Endothelial cell of umbilical vein (primary cell): ENCODE measurements at regions of chr19 and their contacts with region 1.

Region 1: DNA sequence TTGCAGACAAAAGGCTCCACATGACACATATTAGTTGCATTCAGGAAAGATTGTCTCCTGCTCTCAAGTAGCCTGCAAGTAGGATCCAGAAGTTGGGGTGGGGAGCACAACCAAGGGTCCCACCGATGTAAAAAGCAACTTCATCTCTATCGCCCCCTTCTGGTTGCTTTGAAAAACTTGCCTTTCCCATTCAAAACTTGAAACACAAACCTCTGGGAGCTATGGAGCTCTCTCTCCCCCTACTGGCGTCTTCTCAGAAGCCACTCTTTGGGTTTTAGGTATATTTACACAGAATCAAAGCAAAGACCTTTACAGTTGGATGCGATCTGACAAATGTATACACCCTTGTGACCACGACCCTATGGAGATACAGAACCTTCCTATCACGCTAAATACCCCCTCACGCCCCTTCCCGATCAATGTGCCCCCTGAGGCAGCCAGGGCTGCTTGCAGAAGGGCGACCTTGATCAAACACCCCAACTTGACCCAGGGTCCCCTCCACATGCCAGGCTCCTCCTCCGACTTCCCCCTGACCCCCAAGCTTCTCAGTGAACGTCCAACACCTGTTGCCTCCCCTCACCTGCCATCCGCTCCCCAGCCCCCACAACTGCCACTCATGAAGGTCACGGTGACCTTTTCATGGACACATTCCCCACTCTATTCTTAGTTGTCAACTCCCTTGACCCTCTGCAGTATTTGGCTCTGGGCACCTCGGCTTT is 10.1 kb downstream of the NOSIP start:
- DNase-seq: peak; percentile 80
- H3K4me3 ChIP-seq: no peak overlapping the region
- H3K27ac ChIP-seq: no peak overlapping the region
- H3K4me1 ChIP-seq: no peaks in the 10 kb centered on the region
- H3K27me3 ChIP-seq: no peaks in the 10 kb centered on the region
- CTCF ChIP-seq: peak; percentile 94 to 99
- POLR2A ChIP-seq: no peak

Region 2: DNA sequence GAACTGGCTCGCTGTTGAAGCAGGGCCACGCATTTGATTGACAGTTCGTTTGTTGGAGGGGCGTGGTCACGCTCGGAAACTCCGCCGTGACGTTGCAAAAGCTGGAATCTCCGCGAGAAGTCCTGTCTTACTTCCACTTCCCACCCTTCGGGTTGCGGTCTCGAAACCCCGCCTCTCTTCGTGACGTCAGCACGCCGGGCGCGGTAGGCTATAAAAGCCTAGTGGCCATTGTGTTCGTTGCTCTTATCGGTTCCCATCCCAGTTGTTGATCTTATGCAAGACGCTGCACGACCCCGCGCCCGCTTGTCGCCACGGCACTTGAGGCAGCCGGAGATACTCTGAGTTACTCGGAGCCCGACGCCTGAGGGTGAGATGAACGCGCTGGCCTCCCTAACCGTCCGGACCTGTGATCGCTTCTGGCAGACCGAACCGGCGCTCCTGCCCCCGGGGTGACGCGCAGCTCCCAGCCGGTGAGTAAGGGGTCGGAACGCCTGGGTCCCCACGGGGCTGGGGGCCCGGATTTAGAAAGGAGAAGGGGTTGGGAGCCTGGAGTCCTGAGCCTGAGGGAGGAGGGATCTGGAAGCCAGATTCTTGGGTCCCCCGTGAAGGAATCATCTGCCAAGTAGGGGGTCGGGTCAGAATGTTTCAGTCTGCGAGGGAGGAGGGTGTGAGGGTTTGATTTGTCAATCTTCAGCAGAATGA is 698.0 kb before region 1 on chr19 and contains the start of gene PPP1R15A:
- CTCF ChIA-PET with region 1: no interaction called
- POLR2A ChIA-PET with region 1: no interaction called
- dilution Hi-C with region 1: no loop called
- intact Hi-C with region 1: no loop called
- DNase-seq: peak; percentile 100
- H3K4me3 ChIP-seq: peak within 1 kb of the TSS; percentile 93 to 100 (median 100)
- H3K27ac ChIP-seq: peak within 1 kb of the TSS; percentile 100
- H3K4me1 ChIP-seq: peaks cover 29% of the 10 kb centered on the region
- H3K27me3 ChIP-seq: no peaks in the 10 kb centered on the region
- CTCF ChIP-seq: no peak
- POLR2A ChIP-seq: peak; percentile 100
- total RNA-seq, gene PPP1R15A: 67.4 and 73.4 TPM in 2 replicates

Region 3: DNA sequence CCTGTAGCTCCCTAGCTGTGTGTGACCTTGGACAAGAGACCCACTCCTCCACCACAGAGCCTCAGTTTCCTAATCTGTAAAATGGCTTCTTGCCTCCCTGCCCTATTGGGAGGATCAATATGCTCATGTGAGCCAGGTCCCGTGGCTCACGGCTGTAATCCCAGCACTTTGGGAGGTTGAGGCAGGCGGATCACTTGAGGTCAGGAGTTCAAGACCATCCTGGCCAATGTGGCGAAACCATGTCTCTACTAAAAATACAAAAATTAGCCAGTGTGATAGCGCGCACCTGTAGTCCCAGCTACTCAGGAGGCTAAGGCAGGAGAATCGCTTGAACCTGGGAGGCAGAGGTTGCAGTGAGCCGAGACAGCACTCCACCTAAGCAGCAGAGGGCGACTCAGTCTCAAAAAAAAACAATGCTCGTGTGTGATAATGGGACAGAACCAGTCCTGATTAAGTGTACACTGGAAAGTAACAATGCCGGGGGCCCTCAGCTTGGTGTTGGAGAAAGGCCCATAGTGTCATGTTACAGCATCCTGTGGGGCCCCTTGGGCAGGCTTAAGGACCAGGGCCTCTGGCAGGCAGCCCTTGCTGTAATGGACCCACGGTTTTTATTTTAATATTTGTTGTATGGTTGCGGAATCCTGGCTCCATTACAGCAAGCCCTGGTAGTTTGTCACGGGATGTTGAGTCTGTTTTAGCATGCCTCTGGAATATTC is 67.3 kb before region 1 on chr19:
- CTCF ChIA-PET with region 1: interaction called, 4 read pairs
- POLR2A ChIA-PET with region 1: interaction called, 6 read pairs
- dilution Hi-C with region 1: no loop called
- intact Hi-C with region 1: loop called (anchors 1 kb)
- DNase-seq: peak; percentile 83
- H3K4me3 ChIP-seq: no peak overlapping the region
- H3K27ac ChIP-seq: no peak overlapping the region
- H3K4me1 ChIP-seq: peaks cover 28% of the 10 kb centered on the region
- H3K27me3 ChIP-seq: no peaks in the 10 kb centered on the region
- CTCF ChIP-seq: peak; percentile 41 to 70
- POLR2A ChIP-seq: no peak

Region 4: GRCh38 chr19:49512970-49513745 is 57.1 kb before region 1 on chr19:
- CTCF ChIA-PET with region 1: interaction called, 10 read pairs
- POLR2A ChIA-PET with region 1: no interaction called
- dilution Hi-C with region 1: no loop called
- intact Hi-C with region 1: no loop called
- DNase-seq: peak; percentile 44
- H3K4me3 ChIP-seq: peak overlapping the region; percentile 60 to 81 (median 66)
- H3K27ac ChIP-seq: peak overlapping the region; percentile 6
- H3K4me1 ChIP-seq: peaks cover 15% of the 10 kb centered on the region
- H3K27me3 ChIP-seq: no peaks in the 10 kb centered on the region
- CTCF ChIP-seq: no peak
- POLR2A ChIP-seq: no peak

Region 5: GRCh38 chr19:49528211-49528771 is 42.0 kb before region 1 on chr19:
- CTCF ChIA-PET with region 1: interaction called, 11 read pairs
- POLR2A ChIA-PET with region 1: interaction called, 12 read pairs
- dilution Hi-C with region 1: no loop called
- intact Hi-C with region 1: no loop called
- DNase-seq: peak; percentile 32
- H3K4me3 ChIP-seq: peak overlapping the region; percentile 21 to 45 (median 42)
- H3K27ac ChIP-seq: peak overlapping the region; percentile 62
- H3K4me1 ChIP-seq: peaks cover 1% of the 10 kb centered on the region
- H3K27me3 ChIP-seq: no peaks in the 10 kb centered on the region
- CTCF ChIP-seq: no peak
- POLR2A ChIP-seq: no peak

Region 6: GRCh38 chr19:49555600-49556411 is 14.5 kb before region 1 on chr19:
- CTCF ChIA-PET with region 1: interaction called, 51 read pairs
- POLR2A ChIA-PET with region 1: no interaction called
- dilution Hi-C with region 1: no loop called
- intact Hi-C with region 1: loop called (anchors 2 kb)
- DNase-seq: peak; percentile 30
- H3K4me3 ChIP-seq: no peak overlapping the region
- H3K27ac ChIP-seq: peak overlapping the region; percentile 89
- H3K4me1 ChIP-seq: peaks cover 22% of the 10 kb centered on the region
- H3K27me3 ChIP-seq: no peaks in the 10 kb centered on the region
- CTCF ChIP-seq: no peak
- POLR2A ChIP-seq: no peak

Region 7: GRCh38 chr19:49580264-49581006 is 10.1 kb after region 1 on chr19 and contains the start of gene NOSIP:
- CTCF ChIA-PET with region 1: interaction called, 39 read pairs
- POLR2A ChIA-PET with region 1: interaction called, 4 read pairs
- dilution Hi-C with region 1: no loop called
- intact Hi-C with region 1: no loop called
- DNase-seq: peak; percentile 94
- H3K4me3 ChIP-seq: peak within 1 kb of the TSS; percentile 44 to 84 (median 61)
- H3K27ac ChIP-seq: peak within 1 kb of the TSS; percentile 21
- H3K4me1 ChIP-seq: peaks cover 15% of the 10 kb centered on the region
- H3K27me3 ChIP-seq: no peaks in the 10 kb centered on the region
- CTCF ChIP-seq: no peak
- POLR2A ChIP-seq: peak; percentile 99
- total RNA-seq, gene NOSIP: 77.5 and 79.8 TPM in 2 replicates